Calu3 (cell line): ENCODE measurements at regions of chr15 and their contacts with region 1.

Region 1: GRCh38 chr15:86743283-86743903 is 663.7 kb downstream of the AGBL1 start:
- DNase-seq: peak; percentile 38
- H3K4me3 Mint-ChIP-seq: no peak overlapping the region
- H3K27ac Mint-ChIP-seq: no peak overlapping the region
- H3K4me1 Mint-ChIP-seq: no peaks in the 10 kb centered on the region
- H3K27me3 Mint-ChIP-seq: no peaks in the 10 kb centered on the region
- CTCF ChIP-seq: peak; percentile 31

Region 2: GRCh38 chr15:86115144-86115801 is 628.1 kb before region 1 on chr15:
- CTCF ChIA-PET with region 1: no interaction called
- intact Hi-C with region 1: no loop called
- DNase-seq: no peak
- H3K4me3 Mint-ChIP-seq: no peak overlapping the region
- H3K27ac Mint-ChIP-seq: no peak overlapping the region
- H3K4me1 Mint-ChIP-seq: no peaks in the 10 kb centered on the region
- H3K27me3 Mint-ChIP-seq: peaks cover 31% of the 10 kb centered on the region
- CTCF ChIP-seq: no peak

Region 3: GRCh38 chr15:86231864-86232721 is 511.3 kb before region 1 on chr15:
- CTCF ChIA-PET with region 1: no interaction called
- intact Hi-C with region 1: loop called (anchors 5 kb)
- DNase-seq: peak; percentile 25
- H3K4me3 Mint-ChIP-seq: no peak overlapping the region
- H3K27ac Mint-ChIP-seq: no peak overlapping the region
- H3K4me1 Mint-ChIP-seq: no peaks in the 10 kb centered on the region
- H3K27me3 Mint-ChIP-seq: peaks cover 33% of the 10 kb centered on the region
- CTCF ChIP-seq: peak; percentile 13

Region 4: GRCh38 chr15:86624261-86625036 is 118.9 kb before region 1 on chr15:
- CTCF ChIA-PET with region 1: interaction called, 8 read pairs
- intact Hi-C with region 1: loop called (anchors 1 kb)
- DNase-seq: peak; percentile 78
- H3K4me3 Mint-ChIP-seq: no peak overlapping the region
- H3K27ac Mint-ChIP-seq: no peak overlapping the region
- H3K4me1 Mint-ChIP-seq: no peaks in the 10 kb centered on the region
- H3K27me3 Mint-ChIP-seq: no peaks in the 10 kb centered on the region
- CTCF ChIP-seq: peak; percentile 42

Region 5: GRCh38 chr15:86773736-86774135 is 30.3 kb after region 1 on chr15:
- CTCF ChIA-PET with region 1: no interaction called
- intact Hi-C with region 1: no loop called
- DNase-seq: no peak
- H3K4me3 Mint-ChIP-seq: no peak overlapping the region
- H3K27ac Mint-ChIP-seq: no peak overlapping the region
- H3K4me1 Mint-ChIP-seq: no peaks in the 10 kb centered on the region
- H3K27me3 Mint-ChIP-seq: no peaks in the 10 kb centered on the region
- CTCF ChIP-seq: no peak